ENCODE measurements at regions of chr5 and their contacts with region 1.

Region 1: GRCh38 chr5:81435023-81435422 is 41.1 kb upstream of the ACOT12 start:
- DNase-seq: no peak
- ATAC-seq: no peak
- H3K4me3 ChIP-seq: no peak overlapping the region
- H3K4me3 Mint-ChIP-seq: no peak overlapping the region
- H3K27ac ChIP-seq: no peak overlapping the region
- H3K27ac Mint-ChIP-seq: no peak overlapping the region
- H3K4me1 ChIP-seq: no peaks in the 10 kb centered on the region
- H3K4me1 Mint-ChIP-seq: no peaks in the 10 kb centered on the region
- H3K27me3 ChIP-seq: no peaks in the 10 kb centered on the region
- H3K27me3 Mint-ChIP-seq: no peaks in the 10 kb centered on the region

Region 2: GRCh38 chr5:81389025-81389424 is 46.0 kb before region 1 on chr5:
- CTCF ChIA-PET with region 1: no interaction called
- POLR2A ChIA-PET with region 1: no interaction called
- DNase-seq: no peak
- ATAC-seq: no peak
- H3K4me3 ChIP-seq: no peak overlapping the region
- H3K4me3 Mint-ChIP-seq: no peak overlapping the region
- H3K27ac ChIP-seq: no peak overlapping the region
- H3K27ac Mint-ChIP-seq: no peak overlapping the region
- H3K4me1 ChIP-seq: peaks cover 0 to 5% of the 10 kb centered on the region in 2 experiments
- H3K4me1 Mint-ChIP-seq: peaks cover 0 to 6% (median 5%) of the 10 kb centered on the region in 3 donors
- H3K27me3 ChIP-seq: peaks cover 0 to 10% of the 10 kb centered on the region in 2 experiments
- H3K27me3 Mint-ChIP-seq: peaks cover 39 to 45% of the 10 kb centered on the region in 2 donors

Region 3: DNA sequence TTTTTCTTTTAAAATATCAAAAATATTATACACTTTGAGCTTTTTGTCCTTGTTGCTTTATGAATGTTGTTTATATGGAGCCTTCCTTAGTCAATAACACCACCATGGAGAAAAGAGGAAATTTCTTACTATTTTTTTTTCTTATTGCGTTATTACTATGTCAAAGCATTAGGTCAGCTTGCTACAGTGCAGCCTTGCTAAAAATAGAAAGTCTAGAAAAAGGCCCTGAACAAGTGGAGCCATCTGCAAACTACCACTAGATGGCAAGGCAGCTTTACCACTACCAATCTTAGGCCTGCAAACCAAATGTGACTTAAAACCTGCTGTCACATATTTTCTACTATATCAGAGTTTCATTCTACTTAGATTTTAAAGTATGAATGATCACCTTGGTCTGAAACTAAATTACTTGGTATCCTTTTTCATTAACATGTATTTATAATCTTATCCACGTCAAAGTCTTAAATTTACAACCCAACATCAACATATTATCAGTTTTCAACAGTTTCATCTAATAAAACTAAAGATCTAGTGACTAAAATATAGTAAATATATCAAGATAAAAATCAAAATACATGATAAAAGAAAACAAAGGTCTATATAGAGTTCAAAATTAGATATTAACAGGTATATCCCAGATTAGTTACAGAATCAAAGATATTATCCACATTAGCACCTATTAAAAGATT is 72.0 kb after region 1 on chr5:
- CTCF ChIA-PET with region 1: no interaction called
- POLR2A ChIA-PET with region 1: interaction called in 1 of 2 experiments, 15 read pairs
- DNase-seq: peak in 28 of 35 experiments; percentile 1 to 69 (median 18)
- ATAC-seq: peak; percentile 58 to 85 (median 66)
- H3K4me3 ChIP-seq: no peak overlapping the region
- H3K4me3 Mint-ChIP-seq: no peak overlapping the region
- H3K27ac ChIP-seq: no peak overlapping the region
- H3K27ac Mint-ChIP-seq: no peak overlapping the region
- H3K4me1 ChIP-seq: no peaks in the 10 kb centered on the region
- H3K4me1 Mint-ChIP-seq: peaks cover 0 to 2% (median 0%) of the 10 kb centered on the region in 3 donors
- H3K27me3 ChIP-seq: no peaks in the 10 kb centered on the region
- H3K27me3 Mint-ChIP-seq: no peaks in the 10 kb centered on the region

Region 4: GRCh38 chr5:82356808-82357671 is 922.0 kb after region 1 on chr5:
- CTCF ChIA-PET with region 1: no interaction called
- POLR2A ChIA-PET with region 1: interaction called in 1 of 2 experiments, 11 read pairs
- DNase-seq: peak; percentile 51 to 87 (median 74)
- ATAC-seq: peak; percentile 84 to 89 (median 84)
- H3K4me3 ChIP-seq: peak overlapping the region in 1 of 2 donors; percentile 30
- H3K4me3 Mint-ChIP-seq: peak overlapping the region; percentile 61 to 68 (median 65)
- H3K27ac ChIP-seq: peak overlapping the region; percentile 79
- H3K27ac Mint-ChIP-seq: peak overlapping the region; percentile 91 to 97
- H3K4me1 ChIP-seq: peaks cover 13 to 17% of the 10 kb centered on the region in 2 experiments
- H3K4me1 Mint-ChIP-seq: peaks cover 23 to 45% (median 44%) of the 10 kb centered on the region in 3 donors
- H3K27me3 ChIP-seq: no peaks in the 10 kb centered on the region
- H3K27me3 Mint-ChIP-seq: no peaks in the 10 kb centered on the region

Measured in T-cell (primary cell).